ENCODE measurements at regions of chr20 and their contacts with region 1.

Region 1: DNA sequence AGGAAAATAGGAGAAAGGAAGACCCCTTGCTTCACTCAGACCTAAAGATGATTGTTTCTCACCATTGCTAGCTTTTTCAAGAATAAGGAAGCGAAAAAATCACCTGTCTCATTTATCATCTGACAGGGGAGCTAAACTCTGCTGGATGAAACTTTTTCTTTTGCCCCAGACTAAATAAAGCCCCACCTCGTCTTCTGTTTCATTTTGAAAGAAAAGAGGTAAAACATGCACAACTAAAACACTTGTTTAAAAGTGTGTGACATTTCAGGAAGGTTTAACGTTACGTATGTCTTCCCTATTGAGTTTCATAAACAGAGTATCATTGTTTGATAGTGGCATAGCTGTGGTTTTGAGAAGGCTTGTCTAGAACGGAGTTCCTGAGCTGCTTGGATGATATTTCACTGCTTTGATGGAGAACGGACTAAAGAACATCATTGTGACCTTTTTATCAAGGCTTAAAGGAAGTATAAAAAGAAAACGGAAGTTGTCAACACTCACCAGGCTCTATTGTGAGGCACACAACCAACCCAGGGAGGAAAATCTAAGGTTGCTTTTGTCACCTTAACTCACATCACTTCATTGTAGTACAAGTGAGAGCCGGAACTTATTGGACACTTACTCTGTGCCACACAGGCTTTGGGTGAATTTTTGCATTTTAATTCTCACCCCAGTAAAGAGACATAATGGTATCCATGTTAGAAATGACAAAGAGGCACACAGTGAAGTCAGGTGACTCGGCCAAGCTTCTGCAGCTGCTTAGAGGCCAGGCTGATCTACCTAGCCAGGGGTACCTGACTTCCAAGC is 29.5 kb downstream of the TSHZ2 start:
- DNase-seq: peak in 4 of 10 donors; percentile 27 to 69 (median 56)
- ATAC-seq: peak; percentile 74 to 77
- H3K4me3 Mint-ChIP-seq: peak overlapping the region; percentile 63 to 88 (median 82)
- H3K27ac Mint-ChIP-seq: peak overlapping the region; percentile 90 to 98 (median 96)
- H3K4me1 Mint-ChIP-seq: peaks cover 20 to 48% (median 35%) of the 10 kb centered on the region in 4 donors
- H3K27me3 Mint-ChIP-seq: peaks cover 0 to 4% (median 0%) of the 10 kb centered on the region in 5 donors

Region 2: GRCh38 chr20:52410182-52410647 is 591.5 kb before region 1 on chr20:
- POLR2A ChIA-PET with region 1: interaction called, 15 read pairs
- DNase-seq: peak; percentile 17 to 92 (median 73)
- ATAC-seq: peak; percentile 92
- H3K4me3 Mint-ChIP-seq: peak overlapping the region; percentile 70 to 85 (median 78)
- H3K27ac Mint-ChIP-seq: peak overlapping the region; percentile 96 to 100 (median 98)
- H3K4me1 Mint-ChIP-seq: peaks cover 26 to 83% (median 74%) of the 10 kb centered on the region in 4 donors
- H3K27me3 Mint-ChIP-seq: peaks cover 0 to 1% (median 0%) of the 10 kb centered on the region in 5 donors

Region 3: GRCh38 chr20:52972190-52972937 is 29.3 kb before region 1 on chr20 and contains the start of gene TSHZ2:
- POLR2A ChIA-PET with region 1: interaction called, 28 read pairs
- DNase-seq: peak in 6 of 10 donors; percentile 7 to 69 (median 28)
- ATAC-seq: peak; percentile 55 to 59
- H3K4me3 Mint-ChIP-seq: peak within 1 kb of the TSS; percentile 88 to 99 (median 93)
- H3K27ac Mint-ChIP-seq: peak within 1 kb of the TSS; percentile 27 to 98 (median 92)
- H3K4me1 Mint-ChIP-seq: peaks cover 17 to 39% (median 26%) of the 10 kb centered on the region in 4 donors
- H3K27me3 Mint-ChIP-seq: peaks cover 9 to 44% (median 29%) of the 10 kb centered on the region in 5 donors
- polyA plus RNA-seq, gene TSHZ2: 0.42 to 0.63 TPM in 2 of 3 donors, not detected in the other

Region 4: DNA sequence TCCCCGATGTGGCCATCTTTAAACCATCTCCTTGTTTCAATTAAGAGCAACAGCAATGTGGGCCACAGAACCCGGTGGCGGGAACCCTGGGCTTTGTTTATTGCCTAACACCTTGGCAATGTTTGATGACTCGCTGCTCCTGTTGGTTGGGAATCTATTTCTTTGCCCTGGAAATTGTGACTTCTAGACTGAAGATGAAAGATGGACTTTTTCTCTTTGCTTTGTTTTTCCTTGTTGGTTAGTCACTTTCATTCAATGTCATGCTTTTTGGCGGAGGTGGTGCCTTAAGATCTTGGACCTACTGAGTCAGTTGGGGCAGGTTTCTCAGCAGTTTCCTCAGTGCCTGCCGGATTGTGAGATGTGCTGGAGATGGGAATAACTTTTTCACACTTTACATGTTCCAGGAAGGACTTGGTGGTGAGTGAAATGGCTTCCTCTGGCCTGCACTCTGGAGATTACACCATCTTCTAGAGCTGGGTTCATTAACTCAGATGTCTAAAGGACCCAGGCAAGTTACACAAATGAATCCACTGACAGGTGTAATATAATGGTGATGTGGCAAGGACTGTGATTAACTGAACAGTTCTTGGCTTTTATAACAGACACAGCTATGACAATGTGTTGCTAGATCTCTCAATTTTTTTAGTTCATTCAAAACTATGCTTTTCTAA is 26.8 kb after region 1 on chr20:
- POLR2A ChIA-PET with region 1: interaction called, 16 read pairs
- DNase-seq: no peak
- ATAC-seq: no peak
- H3K4me3 Mint-ChIP-seq: no peak overlapping the region
- H3K27ac Mint-ChIP-seq: peak overlapping the region in 1 of 10 donors; percentile 27
- H3K4me1 Mint-ChIP-seq: peaks cover 7 to 10% (median 8%) of the 10 kb centered on the region in 4 donors
- H3K27me3 Mint-ChIP-seq: peaks cover 0 to 20% (median 8%) of the 10 kb centered on the region in 5 donors

Region 5: GRCh38 chr20:53124075-53124551 is 122.4 kb after region 1 on chr20:
- POLR2A ChIA-PET with region 1: no interaction called
- DNase-seq: no peak
- ATAC-seq: no peak
- H3K4me3 Mint-ChIP-seq: no peak overlapping the region
- H3K27ac Mint-ChIP-seq: no peak overlapping the region
- H3K4me1 Mint-ChIP-seq: peaks cover 5 to 17% (median 9%) of the 10 kb centered on the region in 4 donors
- H3K27me3 Mint-ChIP-seq: peaks cover 2 to 22% (median 9%) of the 10 kb centered on the region in 5 donors